CD4-positive, alpha-beta T cell (primary cell): ENCODE measurements at regions of chr7 and their contacts with region 1.

Region 1: DNA sequence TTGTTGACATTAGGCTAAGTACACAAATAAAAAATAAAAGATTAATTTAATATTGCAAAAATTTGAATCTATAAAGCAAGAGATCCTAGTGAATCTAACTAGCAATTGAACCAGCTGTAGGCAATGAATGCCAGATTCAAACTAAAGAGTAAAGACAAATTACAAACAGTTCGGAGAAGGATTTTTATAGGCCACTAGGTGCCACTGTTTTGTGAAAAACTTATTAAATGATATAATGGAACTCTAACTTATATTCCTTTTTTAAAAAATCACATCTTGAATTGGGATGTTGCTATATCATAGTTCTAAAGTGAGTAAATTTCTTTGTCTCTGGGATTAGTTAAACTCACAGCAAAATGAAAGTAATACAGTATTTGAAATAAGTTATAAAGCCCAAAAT is 39.1 kb upstream of the GNAI1 start:
- DNase-seq: peak in 2 of 14 experiments; percentile 6
- ATAC-seq: no peak
- H3K4me3 ChIP-seq: no peak overlapping the region
- H3K4me3 Mint-ChIP-seq: no peak overlapping the region
- H3K27ac ChIP-seq: no peak overlapping the region
- H3K27ac Mint-ChIP-seq: no peak overlapping the region
- H3K4me1 ChIP-seq: no peaks in the 10 kb centered on the region
- H3K4me1 Mint-ChIP-seq: no peaks in the 10 kb centered on the region
- H3K27me3 ChIP-seq: no peaks in the 10 kb centered on the region
- H3K27me3 Mint-ChIP-seq: no peaks in the 10 kb centered on the region
- CTCF ChIP-seq: peak; percentile 31

Region 2: DNA sequence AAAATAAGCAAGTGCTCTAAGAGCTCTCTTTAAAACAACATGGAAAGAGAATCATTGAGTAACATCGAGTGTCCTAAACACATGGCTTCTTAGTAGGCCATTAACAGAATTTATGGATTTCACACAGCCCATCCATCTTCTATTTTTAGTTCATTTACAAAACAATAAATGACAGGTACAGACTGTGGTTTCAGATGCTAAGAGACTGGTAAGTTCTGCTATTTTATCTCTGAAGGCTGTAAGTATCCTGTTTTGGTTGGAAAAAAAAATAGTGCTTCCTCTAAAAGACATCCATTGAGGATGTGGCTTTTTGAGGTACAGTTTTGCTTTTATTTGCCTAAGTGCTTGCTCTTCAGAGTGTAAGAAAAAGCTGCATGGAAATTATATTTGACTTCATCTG is 11.7 kb after region 1 on chr7:
- CTCF ChIA-PET with region 1: no interaction called
- POLR2A ChIA-PET with region 1: no interaction called
- intact Hi-C with region 1: no loop called
- DNase-seq: peak in 1 of 14 experiments; percentile 10
- ATAC-seq: peak; percentile 65
- H3K4me3 ChIP-seq: no peak overlapping the region
- H3K4me3 Mint-ChIP-seq: no peak overlapping the region
- H3K27ac ChIP-seq: no peak overlapping the region
- H3K27ac Mint-ChIP-seq: peak overlapping the region; percentile 8
- H3K4me1 ChIP-seq: no peaks in the 10 kb centered on the region
- H3K4me1 Mint-ChIP-seq: peaks cover 30% of the 10 kb centered on the region
- H3K27me3 ChIP-seq: no peaks in the 10 kb centered on the region
- H3K27me3 Mint-ChIP-seq: no peaks in the 10 kb centered on the region
- CTCF ChIP-seq: no peak

Region 3: DNA sequence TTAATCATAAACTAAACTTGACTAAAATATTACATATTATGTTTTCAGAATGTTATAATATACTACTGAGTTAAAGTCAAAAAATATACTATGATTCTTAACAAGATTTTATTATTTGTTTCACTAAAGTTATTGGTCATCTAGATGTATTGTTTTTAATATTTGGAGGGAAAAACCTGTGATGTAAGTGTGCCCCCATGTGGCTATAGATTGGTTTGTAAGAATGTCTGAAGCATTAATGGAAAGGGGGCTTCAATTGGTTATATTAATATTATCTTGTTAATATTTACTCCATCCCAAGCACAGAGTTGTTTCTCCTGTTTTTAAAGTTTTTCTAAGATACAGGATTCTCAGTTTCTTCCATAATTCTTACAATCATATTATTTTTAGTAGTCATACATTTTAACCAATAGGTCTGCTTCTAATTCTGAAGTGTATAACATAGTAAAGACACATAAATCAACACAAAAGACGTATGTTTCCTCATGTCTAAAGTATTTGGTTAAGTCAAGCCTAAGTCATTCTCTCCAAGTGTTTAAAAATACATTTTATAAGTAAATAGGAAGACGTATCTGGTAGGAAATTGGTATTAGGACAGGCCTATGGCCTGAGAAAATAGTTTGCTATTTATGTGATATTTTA is 358.3 kb after region 1 on chr7:
- CTCF ChIA-PET with region 1: no interaction called
- POLR2A ChIA-PET with region 1: no interaction called
- intact Hi-C with region 1: loop called in 1 of 2 experiments (anchors 10 kb)
- DNase-seq: peak in 2 of 14 experiments; percentile 8 to 13
- ATAC-seq: no peak
- H3K4me3 ChIP-seq: no peak overlapping the region
- H3K4me3 Mint-ChIP-seq: no peak overlapping the region
- H3K27ac ChIP-seq: no peak overlapping the region
- H3K27ac Mint-ChIP-seq: no peak overlapping the region
- H3K4me1 ChIP-seq: no peaks in the 10 kb centered on the region
- H3K4me1 Mint-ChIP-seq: no peaks in the 10 kb centered on the region
- H3K27me3 ChIP-seq: no peaks in the 10 kb centered on the region
- H3K27me3 Mint-ChIP-seq: no peaks in the 10 kb centered on the region
- CTCF ChIP-seq: no peak

Region 4: GRCh38 chr7:80552304-80552703 is 456.8 kb after region 1 on chr7:
- CTCF ChIA-PET with region 1: no interaction called
- POLR2A ChIA-PET with region 1: no interaction called
- intact Hi-C with region 1: no loop called
- DNase-seq: no peak
- ATAC-seq: no peak
- H3K4me3 ChIP-seq: no peak overlapping the region
- H3K4me3 Mint-ChIP-seq: no peak overlapping the region
- H3K27ac ChIP-seq: no peak overlapping the region
- H3K27ac Mint-ChIP-seq: no peak overlapping the region
- H3K4me1 ChIP-seq: no peaks in the 10 kb centered on the region
- H3K4me1 Mint-ChIP-seq: no peaks in the 10 kb centered on the region
- H3K27me3 ChIP-seq: no peaks in the 10 kb centered on the region
- H3K27me3 Mint-ChIP-seq: no peaks in the 10 kb centered on the region
- CTCF ChIP-seq: no peak

Region 5: DNA sequence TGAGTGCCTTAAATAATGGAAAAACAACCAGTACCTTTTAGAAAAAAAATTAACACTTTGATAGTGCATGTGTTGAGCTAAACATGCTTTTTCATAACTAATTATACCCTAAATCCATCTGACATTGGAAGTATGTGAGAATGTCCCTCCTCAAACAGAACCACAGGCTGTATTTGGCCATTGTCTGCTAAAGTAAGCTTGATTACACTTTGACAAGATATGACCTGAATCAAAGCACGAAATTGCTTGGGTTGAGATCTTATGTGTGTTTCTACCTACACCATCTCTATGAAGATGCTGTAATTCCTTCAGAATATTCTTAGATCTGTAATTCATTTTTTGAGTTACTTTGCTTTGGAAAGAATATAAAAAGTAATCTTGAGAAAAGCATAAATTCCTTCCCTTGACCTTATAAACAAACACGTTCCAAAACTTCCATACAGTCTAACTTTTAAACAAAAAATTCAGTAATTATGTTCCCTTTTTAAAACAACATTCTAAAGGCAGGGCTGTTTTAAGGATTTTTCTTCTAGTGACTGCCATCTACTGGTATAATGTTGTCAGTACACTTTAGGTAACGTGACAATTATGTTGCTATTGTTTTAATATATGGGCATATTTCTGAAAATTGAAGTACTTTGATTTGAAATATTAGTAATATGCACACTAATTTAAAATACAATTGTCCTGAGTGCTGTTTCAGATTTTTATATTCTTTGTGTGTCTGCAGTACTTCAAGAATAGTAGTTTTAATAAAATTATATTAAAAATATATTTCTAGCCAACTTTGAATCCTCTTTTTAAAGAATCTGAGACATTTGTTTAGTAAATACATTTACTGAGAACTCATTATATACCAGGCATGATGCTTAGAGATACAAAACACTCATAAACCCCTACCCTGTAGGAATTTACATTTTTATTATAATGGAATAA is 563.8 kb after region 1 on chr7:
- CTCF ChIA-PET with region 1: no interaction called
- POLR2A ChIA-PET with region 1: no interaction called
- intact Hi-C with region 1: loop called in 1 of 2 experiments (anchors 10 kb)
- DNase-seq: peak in 2 of 14 experiments; percentile 6 to 34
- ATAC-seq: no peak
- H3K4me3 ChIP-seq: no peak overlapping the region
- H3K4me3 Mint-ChIP-seq: no peak overlapping the region
- H3K27ac ChIP-seq: no peak overlapping the region
- H3K27ac Mint-ChIP-seq: no peak overlapping the region
- H3K4me1 ChIP-seq: no peaks in the 10 kb centered on the region
- H3K4me1 Mint-ChIP-seq: no peaks in the 10 kb centered on the region
- H3K27me3 ChIP-seq: no peaks in the 10 kb centered on the region
- H3K27me3 Mint-ChIP-seq: no peaks in the 10 kb centered on the region
- CTCF ChIP-seq: peak; percentile 77